Right cardiac atrium (tissue), 5 donors: ENCODE measurements at regions of chr20 and their contacts with region 1.

Region 1: DNA sequence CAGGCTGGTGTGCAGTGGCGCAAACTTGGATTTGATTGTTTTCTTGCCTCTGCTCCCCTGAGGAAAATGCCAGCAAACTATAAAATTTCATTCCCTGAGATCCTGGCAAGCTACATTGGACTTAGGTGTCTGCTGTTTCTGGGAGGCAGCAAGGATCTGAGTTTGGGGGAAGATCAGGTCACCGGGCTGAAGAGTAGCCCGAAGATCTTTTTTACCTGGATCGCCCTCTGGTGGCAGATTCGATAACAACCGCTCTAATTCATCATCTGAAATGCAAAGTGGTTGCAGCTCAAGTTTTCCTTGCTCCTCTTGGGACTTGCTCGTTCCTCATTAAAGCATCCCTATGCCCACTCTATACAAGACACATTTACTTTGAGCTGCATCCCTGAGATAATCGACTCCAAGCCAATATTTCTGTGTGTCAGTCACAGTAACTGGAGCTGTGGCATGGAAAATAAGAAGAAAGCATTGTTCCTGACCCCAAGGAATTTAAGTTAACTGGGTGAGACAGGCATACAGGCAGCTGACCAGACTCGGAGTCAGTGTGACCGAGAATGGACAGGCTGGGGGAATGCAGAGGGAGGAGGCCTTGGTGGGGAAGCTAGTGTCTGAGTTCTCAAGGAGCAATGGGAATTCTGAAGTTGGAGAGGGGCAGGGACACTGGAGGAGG is 131.8 kb upstream of the PROKR2 start:
- DNase-seq: peak in 2 of 3 donors; percentile 27 to 54
- ATAC-seq: no peak
- H3K4me3 ChIP-seq: no peak overlapping the region
- H3K27ac ChIP-seq: no peak overlapping the region
- H3K4me1 ChIP-seq: no peaks in the 10 kb centered on the region
- H3K27me3 ChIP-seq: no peaks in the 10 kb centered on the region

Region 2: GRCh38 chr20:5205348-5206210 is 243.0 kb before region 1 on chr20:
- intact Hi-C with region 1: loop called in 3 of 4 experiments (anchors 5 to 10 kb)
- DNase-seq: peak; percentile 64 to 86 (median 83)
- ATAC-seq: peak; percentile 87 to 92
- H3K4me3 ChIP-seq: no peak overlapping the region
- H3K27ac ChIP-seq: no peak overlapping the region
- H3K4me1 ChIP-seq: peaks cover 9% of the 10 kb centered on the region
- H3K27me3 ChIP-seq: no peaks in the 10 kb centered on the region

Region 3: DNA sequence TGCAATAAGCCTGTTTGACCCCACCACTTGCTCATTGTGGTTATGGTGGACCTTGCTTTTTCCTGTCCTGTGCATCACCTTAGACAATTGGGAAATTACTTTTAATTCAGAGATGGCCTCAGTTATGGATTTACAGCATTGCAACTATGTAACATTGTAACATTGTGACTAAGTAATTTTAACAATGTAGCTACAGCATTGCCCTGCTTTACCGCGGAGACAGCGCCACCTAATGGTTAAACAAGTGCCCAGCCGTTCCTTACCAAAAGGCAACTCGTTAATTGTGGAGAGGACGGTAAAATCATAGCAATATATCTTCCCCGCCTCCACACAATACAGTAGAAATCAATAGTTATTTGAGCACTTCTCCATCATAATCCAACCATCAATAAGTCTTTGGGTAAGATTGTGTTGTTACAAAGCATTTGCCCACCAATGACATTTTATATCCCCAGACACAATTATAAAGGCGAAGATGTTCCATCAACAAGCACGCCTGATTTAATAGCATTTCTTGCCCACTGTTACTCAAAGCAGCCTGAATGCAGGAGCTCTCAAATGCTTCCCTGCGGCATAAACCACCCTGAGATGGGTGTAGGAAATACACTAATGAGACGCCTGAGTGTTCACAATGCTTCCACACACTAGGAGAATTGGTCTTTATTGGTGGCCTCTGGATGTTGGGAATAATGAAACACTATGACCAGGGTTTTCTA is 225.5 kb before region 1 on chr20:
- intact Hi-C with region 1: loop called in 1 of 4 experiments (anchors 5 kb)
- DNase-seq: peak; percentile 36 to 62 (median 62)
- ATAC-seq: peak; percentile 61 to 66
- H3K4me3 ChIP-seq: no peak overlapping the region
- H3K27ac ChIP-seq: no peak overlapping the region
- H3K4me1 ChIP-seq: no peaks in the 10 kb centered on the region
- H3K27me3 ChIP-seq: no peaks in the 10 kb centered on the region